Naive thymus-derived CD4-positive, alpha-beta T cell (primary cell): ENCODE measurements at regions of chr4 and their contacts with region 1.

Region 1: DNA sequence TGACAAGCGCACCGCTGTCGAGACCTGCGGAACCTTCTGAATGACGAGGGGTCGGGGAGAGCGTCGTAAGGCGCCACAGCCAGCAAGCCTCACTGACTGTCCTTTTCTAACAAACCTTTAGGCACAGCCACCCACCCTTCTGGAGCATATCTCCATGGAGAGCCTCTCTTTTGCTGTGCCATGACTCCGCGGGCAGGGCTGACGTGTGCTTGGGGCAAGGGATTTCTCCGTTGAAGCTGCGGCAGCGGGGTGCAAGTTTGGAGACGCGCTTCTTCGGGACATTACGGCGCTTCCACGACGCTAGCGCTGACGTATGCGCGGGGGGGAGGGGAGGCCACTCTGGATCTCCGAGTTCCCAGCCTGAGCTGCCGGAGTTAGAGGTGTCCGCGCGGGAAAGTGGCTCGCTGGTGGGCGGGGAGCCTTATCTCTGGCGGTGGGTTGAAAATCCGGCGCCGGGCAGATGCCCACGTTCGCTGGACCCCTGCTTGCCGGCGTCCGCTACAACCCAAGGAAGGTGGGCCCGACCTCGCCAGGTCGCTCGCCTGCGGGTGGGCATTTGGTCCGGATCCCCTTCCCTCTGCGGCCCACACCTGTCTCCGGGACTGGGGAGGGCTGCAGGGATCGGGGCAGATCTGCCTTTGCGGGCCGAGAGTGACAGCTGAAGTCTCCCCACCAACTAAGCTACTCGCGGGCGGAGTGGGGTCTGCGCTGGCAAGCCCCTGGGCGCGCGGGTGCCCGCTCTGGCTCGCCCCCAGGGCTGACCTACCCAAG is 543 bp upstream of the SLC10A7 start:
- DNase-seq: peak; percentile 63 to 83 (median 76)
- ATAC-seq: peak; percentile 93
- H3K4me3 ChIP-seq: peak overlapping the region; percentile 95
- H3K4me3 Mint-ChIP-seq: no peak overlapping the region
- H3K27ac ChIP-seq: peak overlapping the region; percentile 85
- H3K27ac Mint-ChIP-seq: peak overlapping the region in 2 of 9 donors; percentile 58 to 69
- H3K4me1 ChIP-seq: peaks cover 13 to 24% of the 10 kb centered on the region in 2 donors
- H3K4me1 Mint-ChIP-seq: peaks cover 17 to 37% (median 31%) of the 10 kb centered on the region in 7 donors
- H3K27me3 ChIP-seq: no peaks in the 10 kb centered on the region
- H3K27me3 Mint-ChIP-seq: peaks cover 0 to 7% (median 0%) of the 10 kb centered on the region in 5 donors

Region 2: GRCh38 chr4:145097821-145098674 is 1424.2 kb before region 1 on chr4 and contains the starts of genes ABCE1 and ANAPC10:
- CTCF ChIA-PET with region 1: no interaction called
- POLR2A ChIA-PET with region 1: no interaction called
- intact Hi-C with region 1: loop called in 1 of 2 experiments (anchors 5 kb)
- DNase-seq: peak; percentile 88 to 98 (median 94)
- ATAC-seq: peak; percentile 96
- H3K4me3 ChIP-seq: peak within 1 kb of the TSS; percentile 94
- H3K4me3 Mint-ChIP-seq: peak within 1 kb of the TSS in 9 of 10 donors; percentile 93 to 98 (median 96)
- H3K27ac ChIP-seq: peak within 1 kb of the TSS; percentile 80
- H3K27ac Mint-ChIP-seq: peak within 1 kb of the TSS; percentile 95 to 99 (median 98)
- H3K4me1 ChIP-seq: peaks cover 22 to 23% of the 10 kb centered on the region in 2 donors
- H3K4me1 Mint-ChIP-seq: peaks cover 28 to 52% (median 33%) of the 10 kb centered on the region in 7 donors
- H3K27me3 ChIP-seq: no peaks in the 10 kb centered on the region
- H3K27me3 Mint-ChIP-seq: no peaks in the 10 kb centered on the region
- total RNA-seq, gene ABCE1: 43.4 to 81.3 (median 62.2) TPM
- total RNA-seq, gene ANAPC10: 13.2 to 28.0 (median 19.6) TPM

Region 3: DNA sequence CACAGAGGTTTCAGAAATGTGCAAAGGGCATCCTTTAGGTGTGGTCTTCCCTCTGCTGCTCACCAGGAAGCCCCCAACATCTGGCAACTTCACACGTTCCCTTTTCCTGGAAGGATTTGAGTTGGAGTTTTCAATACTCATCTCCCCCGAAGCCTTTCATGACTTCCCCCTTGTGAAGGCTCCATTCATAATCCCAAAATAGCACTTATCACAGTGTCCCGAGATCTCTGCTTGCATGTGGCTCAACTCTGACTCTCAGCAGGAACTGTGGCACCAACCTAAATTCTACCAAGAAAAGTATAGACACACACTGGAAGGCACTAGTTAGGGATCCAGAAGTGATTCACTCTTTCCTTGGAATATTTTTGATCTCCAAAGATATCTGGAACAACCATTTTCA is 543.1 kb before region 1 on chr4:
- CTCF ChIA-PET with region 1: no interaction called
- POLR2A ChIA-PET with region 1: no interaction called
- intact Hi-C with region 1: no loop called
- DNase-seq: no peak
- ATAC-seq: no peak
- H3K4me3 ChIP-seq: no peak overlapping the region
- H3K4me3 Mint-ChIP-seq: no peak overlapping the region
- H3K27ac ChIP-seq: no peak overlapping the region
- H3K27ac Mint-ChIP-seq: no peak overlapping the region
- H3K4me1 ChIP-seq: no peaks in the 10 kb centered on the region
- H3K4me1 Mint-ChIP-seq: no peaks in the 10 kb centered on the region
- H3K27me3 ChIP-seq: no peaks in the 10 kb centered on the region
- H3K27me3 Mint-ChIP-seq: peaks cover 0 to 17% (median 7%) of the 10 kb centered on the region in 5 donors

Region 4: GRCh38 chr4:146342600-146343192 is 179.6 kb before region 1 on chr4:
- CTCF ChIA-PET with region 1: no interaction called
- POLR2A ChIA-PET with region 1: no interaction called
- intact Hi-C with region 1: loop called (anchors 2 kb)
- DNase-seq: peak in 5 of 9 donors; percentile 27 to 43 (median 31)
- ATAC-seq: no peak
- H3K4me3 ChIP-seq: no peak overlapping the region
- H3K4me3 Mint-ChIP-seq: no peak overlapping the region
- H3K27ac ChIP-seq: no peak overlapping the region
- H3K27ac Mint-ChIP-seq: no peak overlapping the region
- H3K4me1 ChIP-seq: no peaks in the 10 kb centered on the region
- H3K4me1 Mint-ChIP-seq: peaks cover 0 to 12% (median 5%) of the 10 kb centered on the region in 7 donors
- H3K27me3 ChIP-seq: no peaks in the 10 kb centered on the region
- H3K27me3 Mint-ChIP-seq: no peaks in the 10 kb centered on the region

Region 5: GRCh38 chr4:146534178-146534577 is 11.9 kb after region 1 on chr4:
- CTCF ChIA-PET with region 1: no interaction called
- POLR2A ChIA-PET with region 1: no interaction called
- intact Hi-C with region 1: no loop called
- DNase-seq: no peak
- ATAC-seq: no peak
- H3K4me3 ChIP-seq: no peak overlapping the region
- H3K4me3 Mint-ChIP-seq: no peak overlapping the region
- H3K27ac ChIP-seq: no peak overlapping the region
- H3K27ac Mint-ChIP-seq: no peak overlapping the region
- H3K4me1 ChIP-seq: no peaks in the 10 kb centered on the region
- H3K4me1 Mint-ChIP-seq: no peaks in the 10 kb centered on the region
- H3K27me3 ChIP-seq: no peaks in the 10 kb centered on the region
- H3K27me3 Mint-ChIP-seq: peaks cover 0 to 18% (median 14%) of the 10 kb centered on the region in 5 donors

Region 6: DNA sequence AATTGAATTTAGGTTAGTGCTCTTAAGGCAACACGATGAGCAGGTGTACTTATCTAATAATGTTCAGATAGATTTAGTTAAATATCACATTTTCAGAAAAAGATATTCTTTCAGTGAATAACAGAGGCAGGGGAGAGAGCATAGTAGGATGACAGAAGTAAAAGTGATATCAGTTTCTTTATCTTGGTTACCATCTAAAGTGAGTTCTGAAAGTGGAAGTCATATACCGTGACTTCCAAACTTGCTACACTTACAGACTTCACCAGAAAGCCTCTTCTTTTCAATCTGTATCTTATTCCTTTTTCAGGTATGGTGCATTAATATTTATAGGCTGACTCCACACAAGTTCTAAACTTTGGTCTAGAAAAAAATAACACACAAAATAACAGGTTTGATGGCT is 241.3 kb after region 1 on chr4:
- CTCF ChIA-PET with region 1: no interaction called
- POLR2A ChIA-PET with region 1: no interaction called
- intact Hi-C with region 1: no loop called
- DNase-seq: no peak
- ATAC-seq: no peak
- H3K4me3 ChIP-seq: no peak overlapping the region
- H3K4me3 Mint-ChIP-seq: no peak overlapping the region
- H3K27ac ChIP-seq: no peak overlapping the region
- H3K27ac Mint-ChIP-seq: no peak overlapping the region
- H3K4me1 ChIP-seq: no peaks in the 10 kb centered on the region
- H3K4me1 Mint-ChIP-seq: no peaks in the 10 kb centered on the region
- H3K27me3 ChIP-seq: no peaks in the 10 kb centered on the region
- H3K27me3 Mint-ChIP-seq: peaks cover 0 to 3% (median 0%) of the 10 kb centered on the region in 5 donors

Region 7: GRCh38 chr4:146945556-146946374 is 423.5 kb after region 1 on chr4 and contains the start of gene TTC29:
- CTCF ChIA-PET with region 1: no interaction called
- POLR2A ChIA-PET with region 1: no interaction called
- intact Hi-C with region 1: loop called (anchors 2 to 5 kb)
- DNase-seq: peak; percentile 63 to 86 (median 82)
- ATAC-seq: peak; percentile 99
- H3K4me3 ChIP-seq: peak within 1 kb of the TSS; percentile 52
- H3K4me3 Mint-ChIP-seq: peak within 1 kb of the TSS; percentile 78 to 96 (median 85)
- H3K27ac ChIP-seq: no peak within 1 kb of the TSS
- H3K27ac Mint-ChIP-seq: peak within 1 kb of the TSS in 7 of 9 donors; percentile 28 to 79 (median 59)
- H3K4me1 ChIP-seq: peaks cover 15 to 18% of the 10 kb centered on the region in 2 donors
- H3K4me1 Mint-ChIP-seq: peaks cover 9 to 38% (median 32%) of the 10 kb centered on the region in 7 donors
- H3K27me3 ChIP-seq: no peaks in the 10 kb centered on the region
- H3K27me3 Mint-ChIP-seq: peaks cover 7 to 64% (median 18%) of the 10 kb centered on the region in 5 donors
- total RNA-seq, gene TTC29: not detected

Region 8: DNA sequence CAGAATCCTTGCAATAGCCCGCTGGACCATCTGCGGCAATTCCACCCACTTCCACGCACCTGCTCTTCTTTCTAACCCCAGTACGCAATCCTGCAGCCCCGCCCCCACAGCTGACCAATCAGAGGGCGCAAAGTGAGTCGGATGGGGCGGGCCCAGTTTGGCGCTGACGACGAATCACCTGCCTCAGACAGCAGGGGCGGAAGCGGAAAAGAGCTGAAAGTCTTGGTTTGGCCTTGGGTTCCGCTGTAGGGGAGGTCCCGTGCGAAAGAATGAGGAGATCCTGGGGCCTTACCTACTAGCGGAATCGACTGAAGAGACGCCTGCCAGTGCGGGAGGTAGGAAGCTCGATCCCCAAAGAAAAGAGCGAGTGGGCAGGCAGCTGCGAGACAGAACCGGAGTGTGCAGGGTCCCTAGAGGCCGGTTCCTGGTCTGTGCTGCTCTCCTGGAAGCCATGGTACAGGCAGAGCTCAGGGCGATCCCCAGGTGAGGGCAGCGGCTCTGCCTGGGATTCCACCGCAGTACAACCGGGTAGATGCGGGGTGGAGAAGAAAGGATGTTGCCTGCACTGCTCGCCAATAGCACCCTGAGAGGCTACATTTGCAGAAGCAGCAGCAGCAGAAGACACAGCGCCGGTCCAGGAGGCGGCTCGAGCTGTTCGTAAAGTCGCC is 1095.0 kb after region 1 on chr4 and contains the start of gene TMEM184C:
- CTCF ChIA-PET with region 1: no interaction called
- POLR2A ChIA-PET with region 1: no interaction called
- intact Hi-C with region 1: loop called in 1 of 2 experiments (anchors 1 kb)
- DNase-seq: peak; percentile 97 to 99 (median 98)
- ATAC-seq: peak; percentile 97
- H3K4me3 ChIP-seq: peak within 1 kb of the TSS; percentile 89
- H3K4me3 Mint-ChIP-seq: peak within 1 kb of the TSS; percentile 86 to 98 (median 94)
- H3K27ac ChIP-seq: peak within 1 kb of the TSS; percentile 87
- H3K27ac Mint-ChIP-seq: peak within 1 kb of the TSS; percentile 92 to 99 (median 95)
- H3K4me1 ChIP-seq: peaks cover 21 to 30% of the 10 kb centered on the region in 2 donors
- H3K4me1 Mint-ChIP-seq: peaks cover 21 to 48% (median 33%) of the 10 kb centered on the region in 7 donors
- H3K27me3 ChIP-seq: no peaks in the 10 kb centered on the region
- H3K27me3 Mint-ChIP-seq: peaks cover 0 to 22% (median 4%) of the 10 kb centered on the region in 5 donors
- total RNA-seq, gene TMEM184C: 13.7 to 27.4 (median 19.0) TPM